Left colon (tissue), 2 donors: ENCODE measurements at regions of chr17 and their contacts with region 1.

Region 1: DNA sequence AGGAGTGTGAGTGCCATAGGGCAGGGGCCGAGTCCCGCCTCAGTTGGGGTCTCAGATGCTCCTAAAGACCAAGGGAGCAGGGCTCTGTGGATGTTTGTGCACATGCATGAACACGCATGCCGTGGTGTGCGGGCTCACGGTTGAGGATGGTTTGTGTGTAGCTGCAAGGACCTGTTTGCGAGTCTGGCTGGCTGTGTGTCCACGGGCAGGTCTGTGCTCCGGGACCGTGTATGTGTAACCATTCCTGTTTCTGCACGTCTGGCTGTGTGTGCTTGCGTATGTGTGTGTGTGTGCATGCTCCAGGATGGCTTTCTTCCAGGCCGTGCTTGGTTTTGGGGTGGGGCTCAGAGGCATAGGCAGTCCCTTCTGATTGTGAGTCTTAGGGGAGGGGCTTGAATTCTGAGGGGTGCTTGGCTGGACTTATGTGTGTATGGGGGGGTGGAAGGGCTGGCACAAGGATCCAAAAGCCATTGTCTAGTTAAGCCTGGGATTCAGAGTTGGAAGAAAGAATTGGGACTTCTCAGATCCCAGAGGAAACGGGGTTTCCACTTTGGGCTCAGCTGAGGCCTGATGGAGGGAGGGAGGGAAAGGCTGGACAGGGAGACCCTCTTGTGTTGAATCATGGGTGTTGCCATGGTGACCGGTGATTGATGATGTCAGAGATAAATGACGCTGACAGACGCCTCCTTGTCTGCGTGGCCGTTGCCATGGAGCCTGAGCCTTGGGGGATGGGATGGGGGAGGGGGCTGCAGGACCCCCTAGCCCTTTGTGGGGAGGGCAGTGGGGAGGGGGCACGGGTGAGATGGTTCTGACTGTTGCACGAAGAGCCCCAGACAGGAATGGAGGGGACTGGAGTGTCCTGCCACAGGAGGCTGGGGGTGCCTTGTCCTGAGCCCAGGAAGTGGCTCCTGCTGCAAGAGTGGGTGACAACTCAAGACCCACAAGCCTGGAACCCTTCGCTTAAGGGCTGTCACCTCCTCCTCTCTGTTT is 14.3 kb downstream of the GJD3 start:
- DNase-seq: no peak
- ATAC-seq: no peak

Region 2: GRCh38 chr17:40219073-40219860 is 130.9 kb before region 1 on chr17 and contains the start of gene WIPF2:
- intact Hi-C with region 1: no loop called
- DNase-seq: peak; percentile 97 to 98
- ATAC-seq: peak; percentile 98
- total RNA-seq, gene WIPF2: 43.6 to 53.6 TPM

Region 3: DNA sequence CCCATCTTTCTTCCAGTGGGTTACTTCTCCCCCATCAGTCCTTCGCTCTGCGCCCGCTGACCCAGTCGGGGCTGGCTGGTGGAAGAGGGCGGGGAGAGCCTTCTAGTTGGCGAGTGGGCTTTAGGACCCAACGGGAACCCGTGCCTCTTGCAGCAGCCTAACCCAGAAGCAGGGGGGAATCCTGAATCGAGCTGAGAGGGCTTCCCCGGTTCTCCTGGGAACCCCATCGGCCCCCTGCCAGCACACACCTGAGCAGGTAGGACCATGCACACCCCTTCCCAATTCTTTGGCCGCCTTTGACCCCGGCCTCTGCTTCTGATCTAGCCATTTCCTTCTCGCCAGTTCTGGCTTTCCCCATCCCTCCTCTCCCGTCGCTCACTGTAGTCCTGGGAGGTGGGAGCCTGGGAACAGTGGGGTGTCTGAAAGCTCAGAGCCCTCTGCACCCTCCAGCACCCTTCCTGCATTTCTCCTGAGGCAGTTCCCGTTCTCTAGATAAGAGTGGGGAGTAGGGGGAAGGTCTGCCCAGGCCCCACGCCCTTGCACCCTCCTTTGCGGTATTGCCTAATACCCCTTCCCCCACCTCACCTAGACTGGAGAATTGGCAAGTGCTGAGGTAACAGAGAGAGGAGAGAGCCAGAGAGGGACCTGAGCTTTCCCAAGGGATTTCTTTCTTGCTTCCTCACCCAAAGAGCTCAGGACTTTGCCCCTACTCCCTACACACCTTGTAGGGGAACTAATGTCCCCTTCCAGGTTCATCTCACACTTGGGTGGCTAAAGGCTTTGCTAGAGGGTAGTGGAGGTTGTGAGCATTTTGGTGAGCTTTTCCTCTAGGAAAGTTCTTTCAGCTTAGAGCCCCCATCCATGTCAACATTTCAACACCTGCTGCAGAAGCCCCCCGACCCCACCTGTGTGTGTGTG is 40.9 kb before region 1 on chr17 and contains the start of gene RARA:
- intact Hi-C with region 1: loop called in 1 of 2 experiments (anchors 5 kb)
- DNase-seq: peak; percentile 78
- ATAC-seq: peak; percentile 71
- total RNA-seq, gene RARA: 37.2 to 56.4 TPM